HepG2 (cell line): ENCODE measurements at regions of chrX and their contacts with region 1.

Region 1: GRCh38 chrX:74550295-74550802 is 64.1 kb downstream of the RLIM start:
- DNase-seq: peak; percentile 53
- ATAC-seq: peak; percentile 92
- H3K4me3 ChIP-seq: no peak overlapping the region
- H3K27ac ChIP-seq: no peak overlapping the region
- H3K4me1 ChIP-seq: no peaks in the 10 kb centered on the region
- H3K27me3 ChIP-seq: no peaks in the 10 kb centered on the region
- CTCF ChIP-seq: peak; percentile 97
- EP300 ChIP-seq: no peak
- POLR2A ChIP-seq: no peak
- RAD21 ChIP-seq: peak; percentile 79

Region 2: GRCh38 chrX:74382613-74383012 is 167.7 kb before region 1 on chrX:
- CTCF ChIA-PET with region 1: interaction called, 17 read pairs
- POLR2A ChIA-PET with region 1: no interaction called
- in situ Hi-C with region 1: no loop called
- intact Hi-C with region 1: no loop called
- DNase-seq: peak; percentile 29
- ATAC-seq: peak; percentile 89
- H3K4me3 ChIP-seq: no peak overlapping the region
- H3K27ac ChIP-seq: no peak overlapping the region
- H3K4me1 ChIP-seq: no peaks in the 10 kb centered on the region
- H3K27me3 ChIP-seq: no peaks in the 10 kb centered on the region
- CTCF ChIP-seq: peak; percentile 61
- EP300 ChIP-seq: no peak
- POLR2A ChIP-seq: no peak
- RAD21 ChIP-seq: no peak

Region 3: DNA sequence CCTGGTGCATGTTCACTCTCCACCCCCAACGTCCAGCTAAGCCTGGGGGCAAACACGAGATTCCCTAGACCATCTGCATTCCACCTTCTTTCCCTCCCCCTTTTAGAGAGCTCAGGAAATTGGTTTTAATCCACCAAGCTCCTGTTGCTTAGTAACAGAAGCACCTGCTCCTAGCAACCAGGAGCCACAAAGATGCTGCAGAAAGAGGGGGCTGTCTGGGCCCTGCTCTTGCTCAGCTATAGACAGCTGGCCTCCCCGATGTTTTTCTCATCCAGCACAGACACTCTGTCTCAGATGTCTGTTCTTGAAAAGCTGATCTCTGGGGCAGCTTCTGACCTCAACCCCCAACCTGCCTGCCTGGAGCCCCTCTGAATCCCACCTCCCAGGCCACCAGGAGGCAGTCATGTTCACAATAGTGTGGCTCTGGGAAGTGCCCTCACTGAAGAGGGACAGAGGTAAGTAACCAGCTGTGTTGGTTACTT is 57.6 kb before region 1 on chrX:
- CTCF ChIA-PET with region 1: interaction called, 4 read pairs
- POLR2A ChIA-PET with region 1: no interaction called
- in situ Hi-C with region 1: no loop called
- intact Hi-C with region 1: loop called (anchors 1 kb)
- DNase-seq: no peak
- ATAC-seq: peak; percentile 75
- H3K4me3 ChIP-seq: no peak overlapping the region
- H3K27ac ChIP-seq: no peak overlapping the region
- H3K4me1 ChIP-seq: no peaks in the 10 kb centered on the region
- H3K27me3 ChIP-seq: no peaks in the 10 kb centered on the region
- CTCF ChIP-seq: peak; percentile 34
- EP300 ChIP-seq: no peak
- POLR2A ChIP-seq: no peak
- RAD21 ChIP-seq: no peak